Right lobe of liver (tissue), 6 donors: ENCODE measurements at regions of chr11 and their contacts with region 1.

Region 1: DNA sequence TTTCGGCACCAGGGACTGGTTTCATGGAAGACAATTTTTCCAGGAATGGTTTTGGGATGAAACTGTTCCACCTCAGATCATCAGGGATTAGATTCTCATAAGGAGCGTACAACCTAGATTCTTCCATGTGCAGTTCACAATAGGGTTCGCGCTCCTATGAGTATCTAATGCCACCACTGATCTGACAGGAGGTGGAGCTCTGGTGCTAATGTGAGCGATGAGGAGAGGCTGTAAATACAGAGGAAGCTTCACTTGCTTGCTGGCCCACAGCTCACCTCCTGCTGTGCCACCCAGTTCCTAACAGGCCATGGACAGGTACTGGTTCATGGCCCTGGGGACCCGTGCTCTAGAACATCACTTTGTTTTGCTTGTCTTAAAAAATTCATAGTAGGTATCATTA is 41.8 kb upstream of the AMPD3 start:
- DNase-seq: no peak
- ATAC-seq: peak; percentile 40 to 59 (median 44)
- H3K4me3 ChIP-seq: no peak overlapping the region
- H3K27ac ChIP-seq: peak overlapping the region in 1 of 3 donors; percentile 8
- H3K4me1 ChIP-seq: no peaks in the 10 kb centered on the region
- H3K27me3 ChIP-seq: no peaks in the 10 kb centered on the region
- CTCF ChIP-seq: peak in 3 of 4 donors; percentile 9 to 16 (median 10)
- POLR2A ChIP-seq: no peak

Region 2: GRCh38 chr11:10653926-10654810 is 240.9 kb after region 1 on chr11:
- intact Hi-C with region 1: loop called in 1 of 2 experiments (anchors 10 kb)
- DNase-seq: no peak
- ATAC-seq: peak; percentile 70 to 89 (median 80)
- H3K4me3 ChIP-seq: no peak overlapping the region
- H3K27ac ChIP-seq: no peak overlapping the region
- H3K4me1 ChIP-seq: no peaks in the 10 kb centered on the region
- H3K27me3 ChIP-seq: no peaks in the 10 kb centered on the region
- CTCF ChIP-seq: peak; percentile 65 to 78 (median 66)
- POLR2A ChIP-seq: no peak